H1 (cell line): ENCODE measurements at regions of chr17 and their contacts with region 1.

Region 1: DNA sequence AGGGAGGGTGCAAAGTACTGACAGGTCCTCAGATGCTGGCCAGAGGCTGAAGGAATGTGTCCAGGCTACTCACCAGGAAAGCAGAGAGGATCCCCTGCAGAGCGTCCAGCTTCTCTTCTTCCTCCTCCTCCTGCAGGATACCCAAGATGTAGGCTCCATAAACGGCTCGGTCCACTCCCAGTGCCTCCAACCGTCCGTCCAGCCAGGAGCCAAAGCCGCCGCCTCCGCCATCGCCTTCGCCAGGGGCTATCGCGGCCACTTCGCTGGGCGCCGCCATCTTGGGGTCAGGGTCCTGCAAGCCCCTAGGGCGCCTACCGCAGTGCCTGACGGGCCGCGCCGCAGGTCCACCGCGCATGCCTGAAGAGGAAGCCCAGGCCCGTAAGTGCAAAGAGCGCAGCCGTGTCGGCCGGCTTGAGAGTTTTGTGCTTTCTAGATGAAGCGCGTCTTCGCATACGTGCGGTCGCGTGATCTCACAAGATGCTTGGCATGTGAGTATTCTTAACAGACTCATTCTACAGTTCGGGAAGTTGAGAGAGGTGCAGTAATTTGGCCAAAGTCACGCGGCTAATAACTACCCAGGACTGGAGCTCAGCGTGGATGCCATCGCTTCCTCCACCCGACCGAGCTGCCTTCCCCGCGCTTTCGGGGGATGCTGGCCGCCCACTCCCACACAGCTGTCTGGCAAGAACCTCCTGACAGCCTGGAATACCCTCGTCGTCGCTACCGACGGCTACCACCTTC is at the start of gene CCDC43:
- DNase-seq: peak; percentile 75 to 97
- H3K4me3 ChIP-seq: peak within 1 kb of the TSS; percentile 97 to 100 (median 98)
- H3K27ac ChIP-seq: peak within 1 kb of the TSS; percentile 92
- H3K4me1 ChIP-seq: no peaks in the 10 kb centered on the region; a peak in 1 of 7 replicates
- H3K27me3 ChIP-seq: no peaks in the 10 kb centered on the region
- CTCF ChIP-seq: no peak
- EP300 ChIP-seq: 0 out of 3 replicates have a peak, but pooled peaks of 1 of the 2 experiments have one; percentile 12
- POLR2A ChIP-seq: peak; percentile 96 to 97
- RAD21 ChIP-seq: peak in 1 of 2 experiments; percentile 8; a peak in 1 of 4 replicates
- total RNA-seq, gene CCDC43: 33.2 and 38.1 TPM in 2 replicates

Region 2: DNA sequence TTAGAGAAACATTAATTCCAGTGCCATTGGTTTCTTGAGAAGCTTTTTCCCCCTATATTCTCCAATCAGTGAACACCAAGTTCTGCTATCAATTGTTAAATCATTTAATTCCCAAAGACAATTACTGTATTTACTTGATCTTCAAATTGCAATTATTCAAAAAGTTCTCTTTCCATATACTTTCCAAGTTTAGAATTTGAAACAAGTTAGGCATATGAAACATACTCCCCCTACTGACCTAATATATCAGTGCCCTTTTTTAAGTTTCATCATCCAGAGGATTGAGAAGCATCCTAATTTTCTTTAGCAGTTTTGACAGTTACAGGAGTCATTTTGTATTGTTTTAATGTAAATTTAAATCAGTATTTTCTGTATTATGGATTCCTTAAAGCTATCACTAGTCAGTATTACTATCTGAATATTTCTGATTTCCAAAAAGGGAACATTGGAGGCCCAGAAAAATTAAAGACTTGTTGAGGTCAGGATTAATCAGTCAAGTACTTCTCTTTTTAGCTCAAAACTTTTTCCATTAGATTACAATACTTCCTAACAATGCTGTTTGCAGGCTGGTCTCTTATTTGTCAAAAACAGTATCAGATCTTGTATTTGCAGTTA is 17.1 kb before region 1 on chr17:
- CTCF ChIA-PET with region 1: interaction called, 13 read pairs
- POLR2A ChIA-PET with region 1: interaction called, 11 read pairs
- DNase-seq: no peak
- H3K4me3 ChIP-seq: no peak overlapping the region
- H3K27ac ChIP-seq: no peak overlapping the region
- H3K4me1 ChIP-seq: no peaks in the 10 kb centered on the region
- H3K27me3 ChIP-seq: no peaks in the 10 kb centered on the region
- CTCF ChIP-seq: peak in 2 of 3 experiments; percentile 18 to 54; a peak in 2 of 4 replicates
- EP300 ChIP-seq: no peak
- POLR2A ChIP-seq: no peak
- RAD21 ChIP-seq: peak in 1 of 2 experiments; percentile 46

Region 3: DNA sequence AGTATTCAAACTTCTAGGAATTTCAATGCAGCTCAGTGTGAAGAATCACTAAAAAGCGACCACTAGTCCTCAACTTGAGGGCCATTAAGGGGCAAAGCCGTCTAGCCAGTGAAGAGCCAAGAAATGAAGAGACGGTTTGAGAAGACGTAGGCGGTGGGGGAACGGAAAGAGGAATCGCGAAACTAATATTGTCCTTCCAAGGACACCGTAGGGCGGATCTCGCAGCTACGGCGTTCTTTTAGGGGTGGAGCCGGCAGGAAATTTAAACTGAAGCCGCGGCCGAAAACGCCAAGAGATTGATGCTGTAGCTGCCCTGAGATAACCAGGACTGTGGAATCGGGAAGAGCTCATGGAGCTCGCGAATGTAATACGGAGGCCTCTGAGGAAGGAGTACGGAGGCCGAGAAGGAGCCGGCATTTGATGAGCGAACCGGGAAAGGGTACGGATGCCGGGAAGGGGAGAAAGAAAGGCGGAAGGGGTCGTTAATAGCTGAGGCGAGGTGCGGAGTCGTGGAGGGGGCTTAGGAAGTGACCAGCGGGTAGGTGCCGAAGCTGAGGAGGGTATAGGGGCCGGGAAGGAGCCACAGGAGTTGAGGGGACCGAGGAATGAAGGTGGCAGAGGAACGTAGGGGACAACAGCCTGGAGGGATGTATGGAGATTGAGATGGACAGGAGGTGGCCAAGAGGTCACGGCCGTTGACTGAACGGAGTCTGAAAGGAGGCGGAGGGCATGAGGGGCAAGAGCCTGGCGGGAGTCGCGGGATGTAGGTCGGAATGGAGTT is 18.9 kb after region 1 on chr17 and contains the start of gene DBF4B:
- CTCF ChIA-PET with region 1: interaction called, 18 read pairs
- POLR2A ChIA-PET with region 1: interaction called, 13 read pairs
- DNase-seq: peak; percentile 58 to 85
- H3K4me3 ChIP-seq: peak within 1 kb of the TSS; percentile 78 to 99 (median 99)
- H3K27ac ChIP-seq: peak within 1 kb of the TSS; percentile 76
- H3K4me1 ChIP-seq: peaks cover 0 to 3% (median 0%) of the 10 kb centered on the region in 4 experiments; a peak in 3 of 7 replicates
- H3K27me3 ChIP-seq: no peaks in the 10 kb centered on the region; a peak in 1 of 7 replicates
- CTCF ChIP-seq: no peak
- EP300 ChIP-seq: no peak
- POLR2A ChIP-seq: peak in 1 of 2 experiments; percentile 72; a peak in 1 of 3 replicates
- RAD21 ChIP-seq: no peak
- total RNA-seq, gene DBF4B: 26.9 and 29.1 TPM in 2 replicates